ENCODE measurements at regions of chr9 and their contacts with region 1.

Region 1: GRCh38 chr9:135968083-135968476 is 6.9 kb upstream of the UBAC1 start:
- H3K4me3 ChIP-seq: no peak overlapping the region
- H3K27ac ChIP-seq: no peak overlapping the region
- H3K4me1 ChIP-seq: no peaks in the 10 kb centered on the region
- CTCF ChIP-seq: no peak

Region 2: GRCh38 chr9:135990468-135991429 is 22.7 kb after region 1 on chr9:
- CTCF ChIA-PET with region 1: interaction called, 12 read pairs
- POLR2A ChIA-PET with region 1: no interaction called
- H3K4me3 ChIP-seq: no peak overlapping the region
- H3K27ac ChIP-seq: no peak overlapping the region
- H3K4me1 ChIP-seq: peaks cover 7% of the 10 kb centered on the region; the same call in 1 of the 2 replicates
- CTCF ChIP-seq: no peak

Region 3: DNA sequence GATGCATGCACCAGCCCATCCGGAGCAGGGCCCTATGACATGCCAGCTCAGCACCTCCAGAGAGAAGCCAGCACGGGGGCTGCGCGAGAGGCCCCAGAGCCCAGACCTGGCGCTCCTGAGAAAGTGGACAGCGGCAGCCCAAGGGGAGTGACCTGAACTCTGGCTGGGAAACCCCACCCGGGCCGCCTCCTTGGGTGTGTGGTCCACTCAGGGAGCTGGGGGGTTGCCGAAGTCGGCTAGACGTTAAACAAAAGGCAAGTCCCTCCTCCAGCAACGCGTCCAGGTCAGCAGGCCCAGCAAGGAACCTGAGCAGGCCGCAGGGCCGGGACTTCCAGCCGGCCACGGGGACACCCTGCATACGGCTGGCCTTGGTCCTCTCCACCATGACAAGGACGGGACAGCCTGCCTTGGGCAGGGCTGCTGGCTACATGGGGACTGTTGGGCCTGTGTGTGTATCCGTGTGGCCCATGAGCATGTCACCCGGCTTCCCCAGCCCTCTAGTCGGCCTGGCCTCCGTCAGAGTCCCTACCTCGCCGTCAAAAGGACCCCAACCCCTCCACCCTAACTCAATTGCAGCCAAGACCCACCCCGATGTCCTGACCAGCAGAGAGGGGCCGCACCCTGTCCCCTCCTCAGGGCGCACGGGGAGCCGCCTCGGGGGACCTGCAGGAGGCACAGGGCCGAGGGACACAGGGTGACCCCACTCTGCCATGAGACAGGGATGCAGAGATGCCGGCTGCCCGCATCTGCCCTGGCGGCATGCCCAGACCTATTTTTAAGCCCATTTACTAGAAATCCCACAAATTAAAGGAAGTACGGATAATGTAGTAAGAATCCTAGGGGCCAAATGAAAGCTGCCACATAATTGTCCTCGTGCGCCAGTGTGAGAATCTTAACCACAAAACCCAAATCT is 91.5 kb after region 1 on chr9:
- CTCF ChIA-PET with region 1: interaction called, 11 read pairs
- POLR2A ChIA-PET with region 1: no interaction called
- H3K4me3 ChIP-seq: no peak overlapping the region
- H3K27ac ChIP-seq: no peak overlapping the region
- H3K4me1 ChIP-seq: no peaks in the 10 kb centered on the region; the same call in 1 of the 2 replicates
- CTCF ChIP-seq: no peak

Region 4: DNA sequence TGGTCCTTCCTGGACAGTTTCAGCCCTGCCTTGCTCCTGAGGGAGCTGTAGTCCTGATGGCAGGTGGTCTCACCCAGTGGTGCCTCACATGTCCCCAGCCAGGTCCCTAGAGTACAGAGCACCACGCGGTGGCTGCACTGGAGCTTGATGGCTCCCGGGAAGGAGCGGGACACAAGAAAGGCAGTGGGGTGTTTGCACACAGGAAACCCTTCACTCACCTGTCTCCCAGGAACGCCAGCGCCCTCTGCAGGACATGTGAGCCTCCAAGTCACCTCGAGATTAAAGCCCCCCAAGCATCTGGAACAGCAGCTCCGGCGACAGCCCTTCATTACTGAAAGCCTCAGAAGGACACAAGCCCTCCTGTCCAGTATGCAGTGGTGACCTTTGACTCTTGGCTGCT is 170.5 kb after region 1 on chr9:
- CTCF ChIA-PET with region 1: interaction called, 20 read pairs
- POLR2A ChIA-PET with region 1: no interaction called
- H3K4me3 ChIP-seq: no peak overlapping the region
- H3K27ac ChIP-seq: no peak overlapping the region
- H3K4me1 ChIP-seq: no peaks in the 10 kb centered on the region
- CTCF ChIP-seq: peak; percentile 29; the same call in 1 of the 2 replicates

Region 5: DNA sequence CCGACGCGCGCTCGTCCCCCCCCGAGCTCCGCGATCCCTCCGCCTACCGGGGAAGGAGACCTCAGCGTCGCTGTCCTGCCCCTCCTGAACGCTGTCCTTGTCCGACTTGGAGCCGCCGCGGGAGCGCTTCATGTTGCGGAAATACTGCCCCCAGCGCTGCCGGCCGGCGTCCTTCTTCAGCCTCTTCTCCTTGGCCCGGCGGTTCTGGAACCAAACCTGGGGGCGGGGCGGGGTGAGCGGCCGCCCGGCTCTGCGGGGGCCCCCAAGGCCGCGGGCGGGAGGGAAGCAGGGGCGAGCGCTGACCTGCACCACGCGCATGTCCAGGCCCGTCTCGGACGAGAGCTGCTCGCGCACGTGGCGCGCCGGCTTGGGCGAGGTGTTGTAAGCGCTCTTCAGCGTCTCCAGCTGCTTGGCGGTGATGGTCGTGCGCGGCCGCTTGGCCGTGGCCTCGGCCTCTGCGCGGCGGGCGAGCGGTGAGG is 230.6 kb after region 1 on chr9:
- CTCF ChIA-PET with region 1: no interaction called
- POLR2A ChIA-PET with region 1: no interaction called
- H3K4me3 ChIP-seq: no peak overlapping the region
- H3K27ac ChIP-seq: no peak overlapping the region
- H3K4me1 ChIP-seq: no peaks in the 10 kb centered on the region; the same call in 1 of the 2 replicates
- CTCF ChIP-seq: no peak